ENCODE measurements at regions of chr1 and their contacts with region 1.

Region 1: DNA sequence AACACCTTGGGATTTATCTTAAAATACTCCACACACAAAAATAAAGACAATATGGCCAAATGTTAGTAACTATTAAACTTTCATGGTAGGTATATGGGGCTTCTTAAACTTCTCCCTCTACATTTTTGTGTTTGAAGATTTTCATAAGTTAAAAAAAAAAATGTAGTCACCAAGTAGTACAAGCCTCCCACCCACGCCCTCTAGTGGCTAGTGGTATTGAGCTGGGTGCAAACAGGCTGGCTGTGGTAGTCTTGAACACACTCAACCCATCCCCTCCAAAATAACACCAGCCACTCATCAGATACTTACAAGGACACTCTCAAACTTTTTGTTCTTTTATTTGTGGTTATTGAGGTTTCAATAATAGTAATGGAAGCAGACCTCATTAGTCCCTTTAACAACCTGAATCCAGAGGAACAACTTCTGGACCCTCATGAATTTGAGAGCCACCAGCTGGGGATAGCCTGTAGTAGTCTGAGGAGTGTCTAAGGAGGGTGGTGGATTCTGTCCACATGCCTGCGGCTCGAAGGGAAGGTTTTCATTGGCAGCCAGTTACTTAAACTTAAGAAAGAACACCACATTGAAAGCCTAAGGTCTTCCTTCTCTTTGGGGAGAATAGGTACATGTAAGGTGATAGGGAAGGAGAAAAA is 15.6 kb downstream of the RD3 start:
- DNase-seq: peak; percentile 84
- H3K4me3 ChIP-seq: no peak overlapping the region
- H3K27ac ChIP-seq: no peak overlapping the region
- H3K4me1 ChIP-seq: no peaks in the 10 kb centered on the region
- H3K27me3 ChIP-seq: no peaks in the 10 kb centered on the region
- CTCF ChIP-seq: peak; percentile 72

Region 2: DNA sequence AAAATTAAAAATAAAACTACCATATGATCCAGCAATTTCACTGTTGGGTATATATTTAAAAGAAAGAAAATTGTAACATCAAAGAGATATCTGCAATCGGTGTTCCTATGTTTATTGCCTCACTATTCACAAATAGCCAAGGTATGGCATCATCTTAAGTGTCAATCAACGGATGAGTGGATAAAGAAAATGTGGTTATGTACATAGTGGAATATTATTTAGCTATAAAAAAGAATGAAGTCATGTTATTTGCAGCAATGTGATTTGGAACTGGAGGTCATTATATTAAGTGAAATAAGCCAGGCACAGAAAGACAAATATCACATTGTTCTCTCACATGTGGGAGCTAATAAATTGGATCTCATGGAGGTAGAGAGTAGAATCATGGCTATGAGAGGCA is 60.6 kb before region 1 on chr1:
- intact Hi-C with region 1: loop called (anchors 10 kb)
- DNase-seq: no peak
- H3K4me3 ChIP-seq: peak overlapping the region; percentile 40
- H3K27ac ChIP-seq: no peak overlapping the region
- H3K4me1 ChIP-seq: no peaks in the 10 kb centered on the region
- H3K27me3 ChIP-seq: no peaks in the 10 kb centered on the region
- CTCF ChIP-seq: no peak